Pancreas (tissue), 10 donors: ENCODE measurements at regions of chr15 and their contacts with region 1.

Region 1: DNA sequence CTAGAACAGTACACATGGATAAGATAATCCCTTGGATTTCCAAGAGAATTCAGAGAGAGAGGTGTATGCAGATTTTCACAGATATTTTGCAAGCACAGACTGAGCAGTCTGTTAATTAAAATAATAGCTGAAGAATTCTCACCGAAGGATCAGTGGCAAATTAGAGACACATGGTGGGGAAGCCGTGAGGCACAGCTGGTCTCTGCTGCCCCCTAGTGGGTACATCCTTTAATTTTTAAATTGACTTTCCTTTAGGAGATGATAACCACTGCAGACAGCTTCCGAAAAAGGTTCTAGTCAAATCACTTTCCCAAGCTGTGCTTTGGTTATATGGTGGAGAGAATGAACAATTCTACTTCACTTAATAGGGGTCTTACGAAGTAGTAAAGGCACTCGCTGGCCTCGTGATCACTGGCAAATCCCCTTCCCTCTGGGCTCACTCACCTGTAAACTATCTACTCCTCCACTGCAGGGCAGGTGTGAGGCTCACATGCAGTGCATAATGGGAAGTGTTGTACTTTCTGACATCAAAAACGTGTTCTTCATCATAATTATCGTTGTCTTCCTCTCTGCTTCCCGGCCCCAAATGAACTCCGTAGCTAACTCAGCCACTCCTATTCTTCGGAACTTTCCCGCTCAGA is 19.5 kb downstream of the MESD start:
- DNase-seq: peak in 2 of 6 donors; percentile 14 to 55
- ATAC-seq: peak; percentile 56 to 93 (median 85)
- H3K4me3 ChIP-seq: no peak overlapping the region
- H3K27ac ChIP-seq: no peak overlapping the region
- H3K4me1 ChIP-seq: no peaks in the 10 kb centered on the region
- H3K27me3 ChIP-seq: no peaks in the 10 kb centered on the region
- CTCF ChIP-seq: peak; percentile 69 to 85 (median 80)

Region 2: DNA sequence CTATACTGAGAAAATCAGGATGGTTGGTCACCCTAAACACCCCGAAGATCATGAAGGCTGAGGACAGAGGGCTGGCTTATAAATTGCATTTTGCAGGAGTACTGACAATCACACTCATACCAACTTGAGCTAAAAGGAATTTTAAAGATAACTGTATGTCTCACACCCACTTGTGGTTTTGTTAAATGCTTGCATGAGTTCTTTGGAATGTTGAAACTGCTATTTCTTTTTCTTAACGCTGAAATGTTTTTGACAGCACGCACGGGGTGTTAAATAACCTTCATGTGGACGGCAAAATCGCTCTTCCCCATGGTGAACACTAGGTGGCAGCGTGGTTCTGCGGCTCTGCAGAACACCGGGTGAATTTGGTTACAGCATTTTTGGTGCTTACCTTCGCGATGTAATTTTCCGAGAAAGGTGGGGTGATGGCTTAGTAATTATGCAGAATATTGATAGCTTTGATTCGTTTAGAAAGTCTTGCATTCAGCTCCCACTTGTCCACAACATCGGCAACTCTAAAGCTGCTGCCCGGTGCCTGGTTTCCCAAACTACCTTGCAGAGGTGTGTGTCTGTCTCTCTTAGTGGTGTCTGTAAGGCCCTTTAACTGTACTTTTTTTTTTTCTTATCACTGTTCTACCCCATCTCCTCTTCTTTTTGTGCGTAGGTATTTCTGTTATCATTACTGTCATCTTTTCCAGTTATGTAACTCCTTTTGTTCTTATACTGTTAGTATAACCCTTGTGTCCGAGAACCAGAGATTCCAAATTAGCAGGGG is 514.3 kb before region 1 on chr15:
- intact Hi-C with region 1: loop called in 1 of 3 experiments (anchors 10 kb)
- DNase-seq: peak in 4 of 6 donors; percentile 38 to 65 (median 44)
- ATAC-seq: peak; percentile 87 to 93 (median 92)
- H3K4me3 ChIP-seq: no peak overlapping the region
- H3K27ac ChIP-seq: peak overlapping the region in 2 of 4 donors; percentile 8 to 19
- H3K4me1 ChIP-seq: peaks cover 0 to 4% (median 0%) of the 10 kb centered on the region in 3 donors
- H3K27me3 ChIP-seq: no peaks in the 10 kb centered on the region
- CTCF ChIP-seq: peak; percentile 68 to 87 (median 78)

Region 3: GRCh38 chr15:80567721-80568157 is 402.4 kb before region 1 on chr15:
- intact Hi-C with region 1: loop called in 1 of 3 experiments (anchors 10 kb)
- DNase-seq: peak in 3 of 6 donors; percentile 17 to 66 (median 24)
- ATAC-seq: peak; percentile 60 to 95 (median 92)
- H3K4me3 ChIP-seq: no peak overlapping the region
- H3K27ac ChIP-seq: no peak overlapping the region
- H3K4me1 ChIP-seq: no peaks in the 10 kb centered on the region
- H3K27me3 ChIP-seq: no peaks in the 10 kb centered on the region
- CTCF ChIP-seq: peak; percentile 23 to 56 (median 44)

Region 4: DNA sequence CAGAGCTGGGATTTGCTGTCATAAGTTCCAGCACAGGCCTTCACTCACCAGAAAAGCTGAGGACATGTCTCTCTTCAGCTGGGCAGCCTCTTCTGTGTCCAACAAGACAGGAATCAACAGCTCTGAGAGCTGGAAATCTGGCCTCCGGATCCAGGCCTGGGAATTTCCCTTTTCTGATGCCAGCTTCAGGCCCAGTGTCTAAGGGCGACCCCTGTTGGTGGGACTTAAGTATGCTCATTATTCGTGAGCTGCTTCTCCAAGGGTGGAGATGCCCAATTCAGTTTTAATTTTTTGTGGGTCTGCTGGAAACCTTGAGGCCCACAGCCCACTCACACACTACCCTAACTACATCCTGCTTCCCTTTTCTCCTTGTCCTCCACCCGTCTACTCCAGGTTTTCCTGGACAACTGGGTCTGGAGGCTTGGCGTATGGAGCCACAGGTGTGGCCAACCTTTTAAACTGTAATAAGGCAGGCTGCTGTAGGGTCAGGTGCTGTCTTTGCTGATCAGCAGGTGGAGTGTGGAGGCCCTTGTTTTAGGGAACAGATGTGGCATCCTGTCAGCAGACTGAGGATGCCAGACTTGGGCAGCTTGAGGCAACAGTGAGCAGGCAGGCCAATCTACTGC is 193.6 kb before region 1 on chr15:
- intact Hi-C with region 1: loop called in 1 of 3 experiments (anchors 10 kb)
- DNase-seq: peak; percentile 65 to 78 (median 73)
- ATAC-seq: peak in 3 of 4 donors; percentile 72 to 78 (median 76)
- H3K4me3 ChIP-seq: no peak overlapping the region
- H3K27ac ChIP-seq: no peak overlapping the region
- H3K4me1 ChIP-seq: peaks cover 0 to 9% (median 6%) of the 10 kb centered on the region in 3 donors
- H3K27me3 ChIP-seq: peaks cover 0 to 25% (median 5%) of the 10 kb centered on the region in 4 donors
- CTCF ChIP-seq: peak; percentile 62 to 86 (median 67)

Region 5: GRCh38 chr15:80915472-80915871 is 54.7 kb before region 1 on chr15:
- intact Hi-C with region 1: no loop called
- DNase-seq: no peak
- ATAC-seq: no peak
- H3K4me3 ChIP-seq: no peak overlapping the region
- H3K27ac ChIP-seq: no peak overlapping the region
- H3K4me1 ChIP-seq: no peaks in the 10 kb centered on the region
- H3K27me3 ChIP-seq: no peaks in the 10 kb centered on the region
- CTCF ChIP-seq: no peak

Region 6: GRCh38 chr15:80929225-80929624 is 40.9 kb before region 1 on chr15:
- intact Hi-C with region 1: no loop called
- DNase-seq: no peak
- ATAC-seq: no peak
- H3K4me3 ChIP-seq: no peak overlapping the region
- H3K27ac ChIP-seq: no peak overlapping the region
- H3K4me1 ChIP-seq: no peaks in the 10 kb centered on the region
- H3K27me3 ChIP-seq: no peaks in the 10 kb centered on the region
- CTCF ChIP-seq: no peak